ENCODE measurements at regions of chr7 and their contacts with region 1.

Region 1: DNA sequence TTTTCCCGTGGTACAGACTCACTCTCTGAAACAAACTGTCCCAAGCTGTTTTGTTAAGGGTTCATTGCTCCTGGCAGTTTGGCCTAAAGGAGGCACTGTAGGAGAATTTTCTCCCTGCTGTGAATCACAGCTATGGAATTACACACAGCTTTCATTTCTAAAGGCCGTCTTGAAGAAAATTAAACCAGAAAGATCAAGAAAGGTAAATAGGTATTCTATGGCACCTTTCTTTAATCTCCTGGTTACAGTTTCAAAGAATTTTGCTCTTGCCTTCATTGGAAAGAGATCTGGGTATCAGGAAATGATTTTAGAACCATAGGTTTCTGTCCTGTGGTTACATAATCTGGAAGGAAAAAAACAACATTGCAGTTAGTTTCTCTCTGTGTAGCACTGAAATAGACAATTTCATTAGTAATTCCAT is 51.2 kb downstream of the PDK4 start:
- DNase-seq: peak; percentile 30
- ATAC-seq: peak; percentile 84 to 92

Region 2: GRCh38 chr7:95581467-95581866 is 36.4 kb after region 1 on chr7:
- intact Hi-C with region 1: loop called in 1 of 2 experiments (anchors 2 kb)
- DNase-seq: no peak
- ATAC-seq: no peak

Region 3: GRCh38 chr7:95596198-95597063 is 51.3 kb after region 1 on chr7 and contains the start of gene PDK4:
- intact Hi-C with region 1: loop called (anchors 5 kb)
- DNase-seq: peak; percentile 96
- ATAC-seq: peak; percentile 96 to 98
- total RNA-seq, gene PDK4: 129 to 528 TPM

Region 4: DNA sequence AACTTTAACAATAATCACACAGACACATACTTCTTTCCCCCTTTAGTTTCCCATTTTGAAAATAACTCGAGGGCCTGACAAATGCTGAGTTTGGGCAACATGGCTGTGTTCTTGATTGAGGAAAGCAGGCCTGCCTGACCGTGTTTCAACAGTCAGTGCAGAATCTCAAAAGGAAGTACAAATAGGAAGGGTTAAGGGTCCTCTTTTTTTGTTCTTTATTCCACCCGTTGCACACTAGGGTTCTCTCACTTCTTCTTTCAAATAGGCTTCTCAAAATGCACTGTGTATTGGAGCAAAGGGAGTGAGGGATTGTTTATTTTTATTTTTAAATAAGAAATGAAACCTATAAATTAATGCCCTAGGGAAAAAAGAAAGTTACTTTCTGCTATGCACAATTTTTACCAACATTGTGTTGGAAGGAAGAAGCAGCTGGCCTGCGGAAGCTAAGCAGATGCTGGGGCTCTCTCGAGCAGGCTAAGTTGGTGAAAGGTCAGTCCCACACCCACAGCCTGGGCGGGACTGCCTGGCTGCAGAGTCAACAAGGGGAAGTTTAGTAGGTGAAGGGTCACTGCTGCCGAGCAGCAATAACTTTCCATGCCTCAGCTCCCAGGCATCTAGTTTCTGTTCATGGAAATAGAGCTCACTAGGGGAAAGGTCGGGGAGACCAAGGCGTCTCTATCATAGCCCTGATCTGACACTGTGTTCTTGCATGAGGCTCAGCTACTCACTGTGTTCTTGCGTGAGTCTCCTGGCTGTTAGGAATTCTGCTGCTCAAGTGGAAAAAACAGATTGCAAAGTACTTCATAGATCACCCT is 63.5 kb after region 1 on chr7:
- intact Hi-C with region 1: no loop called
- DNase-seq: peak; percentile 93
- ATAC-seq: peak; percentile 99

Region 5: DNA sequence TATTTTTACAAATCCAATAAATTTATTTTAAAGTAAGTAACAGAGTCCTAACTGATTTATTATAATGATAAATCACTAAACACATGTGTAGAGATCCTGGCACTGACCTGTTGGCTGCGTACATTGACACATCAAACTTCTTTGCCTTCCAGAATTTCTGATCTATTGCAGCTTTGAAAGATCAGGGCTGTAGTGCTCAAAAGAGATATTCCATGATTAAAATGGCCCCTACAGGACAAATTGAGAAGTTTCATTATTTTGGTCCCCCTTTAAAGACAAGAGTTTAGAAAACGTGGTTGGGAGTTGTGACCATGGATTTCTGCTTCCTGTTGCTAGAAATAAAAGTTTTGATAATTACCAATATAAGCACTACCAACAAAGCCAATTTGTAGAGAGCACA is 138.9 kb after region 1 on chr7:
- intact Hi-C with region 1: loop called in 1 of 2 experiments (anchors 5 kb)
- DNase-seq: no peak
- ATAC-seq: peak; percentile 62 to 69

Region 6: DNA sequence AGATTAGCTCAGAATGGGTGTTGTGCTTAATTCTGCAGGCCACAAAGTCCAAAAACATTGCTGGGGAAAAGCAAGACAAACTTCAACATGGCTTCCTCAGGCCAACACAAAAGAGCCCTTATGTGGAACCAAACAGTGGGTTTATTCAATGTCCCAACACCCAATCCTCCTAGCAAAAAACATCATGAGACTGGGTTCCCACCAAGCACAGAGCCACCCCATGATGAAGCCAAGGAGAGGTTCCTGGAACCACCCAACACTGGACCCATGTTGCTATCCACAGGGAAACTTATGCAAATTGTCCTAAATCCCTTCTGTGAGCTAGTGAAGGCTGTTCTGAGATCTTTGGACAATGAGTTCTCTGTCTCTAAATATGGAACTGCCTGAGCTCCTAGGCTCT is 752.8 kb after region 1 on chr7:
- intact Hi-C with region 1: no loop called
- DNase-seq: no peak
- ATAC-seq: no peak

Measured in left cardiac atrium (tissue), 4 donors.